GM12878 (cell line): ENCODE measurements at regions of chr2 and their contacts with region 1.

Region 1: DNA sequence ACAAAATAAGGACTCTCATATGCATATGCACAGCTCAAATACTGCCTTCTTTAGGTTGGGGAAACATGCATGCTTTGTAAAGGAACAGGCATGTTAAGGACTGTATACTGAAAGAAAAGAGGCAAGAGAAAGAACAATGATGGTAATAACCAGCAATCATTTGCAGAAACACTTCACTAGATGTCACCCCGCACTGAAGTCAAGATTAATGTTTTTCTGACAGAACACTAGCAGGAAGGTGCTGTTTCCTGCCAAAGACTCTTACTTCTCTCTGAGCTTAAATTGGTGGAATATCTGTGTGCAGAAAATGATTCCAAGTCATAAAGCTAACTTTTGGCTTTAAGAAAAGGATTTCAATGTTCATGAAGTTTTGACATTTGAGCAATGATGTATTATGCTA is 19.3 kb upstream of the CSRNP3 start:
- DNase-seq: no peak
- ATAC-seq: peak; percentile 59
- H3K4me3 ChIP-seq: no peak overlapping the region
- H3K27ac ChIP-seq: no peak overlapping the region
- H3K4me1 ChIP-seq: no peaks in the 10 kb centered on the region
- H3K27me3 ChIP-seq: no peaks in the 10 kb centered on the region
- CTCF ChIP-seq: no peak; a peak in 1 of 6 replicates
- EP300 ChIP-seq: no peak
- POLR2A ChIP-seq: no peak
- RAD21 ChIP-seq: no peak

Region 2: DNA sequence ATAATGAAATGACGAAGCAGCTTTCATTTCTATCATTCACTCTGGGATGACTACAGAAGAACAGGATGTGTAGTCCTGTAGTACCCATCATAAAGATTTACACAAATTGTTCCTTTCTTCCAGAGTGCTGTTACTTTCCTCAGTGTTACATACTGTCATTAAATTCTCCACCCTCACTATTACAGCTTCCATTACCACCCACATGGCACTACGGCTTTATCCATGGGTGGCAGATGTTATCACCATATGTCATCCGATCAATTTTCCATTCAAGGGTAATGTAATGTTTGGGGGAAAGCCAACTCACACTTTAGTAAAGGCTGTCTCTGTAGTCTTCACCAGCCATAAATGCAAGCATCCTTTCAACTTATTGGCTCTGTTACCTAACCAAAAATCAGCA is 12.3 kb after region 1 on chr2:
- CTCF ChIA-PET with region 1: interaction called, 5 read pairs
- POLR2A ChIA-PET with region 1: interaction called, 3 read pairs
- RAD21 ChIA-PET with region 1: interaction called, 4 read pairs
- SMC1A ChIA-PET with region 1: interaction called, 10 read pairs
- in situ Hi-C with region 1: no loop called
- intact Hi-C with region 1: no loop called
- DNase-seq: no peak
- ATAC-seq: no peak; the same call in 2 of the 3 replicates
- H3K4me3 ChIP-seq: no peak overlapping the region
- H3K27ac ChIP-seq: no peak overlapping the region
- H3K4me1 ChIP-seq: no peaks in the 10 kb centered on the region
- H3K27me3 ChIP-seq: no peaks in the 10 kb centered on the region
- CTCF ChIP-seq: no peak
- EP300 ChIP-seq: no peak
- POLR2A ChIP-seq: no peak
- RAD21 ChIP-seq: no peak

Region 3: DNA sequence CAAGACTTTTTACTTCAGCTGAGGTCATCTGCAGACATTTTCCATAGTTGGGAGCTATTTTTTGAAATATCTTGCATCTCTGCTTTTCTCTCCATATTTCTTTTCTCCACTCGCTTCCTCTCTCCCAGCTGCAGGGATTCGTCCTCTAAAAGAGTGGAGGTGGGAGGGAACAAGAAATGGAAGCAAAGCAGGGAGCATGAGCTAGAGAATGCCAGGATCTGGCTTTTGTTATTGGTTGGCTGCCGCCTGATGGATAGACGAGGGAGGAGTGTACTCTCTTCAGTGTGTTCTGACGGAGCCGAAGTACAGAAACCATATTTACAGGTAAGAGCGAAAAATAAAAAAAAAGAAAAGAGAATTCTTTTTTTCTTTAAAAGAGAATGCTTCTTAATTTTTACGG is 19.3 kb after region 1 on chr2 and contains the start of gene CSRNP3:
- CTCF ChIA-PET with region 1: interaction called, 8 read pairs
- POLR2A ChIA-PET with region 1: interaction called, 3 read pairs
- RAD21 ChIA-PET with region 1: interaction called, 6 read pairs
- SMC1A ChIA-PET with region 1: interaction called, 13 read pairs
- in situ Hi-C with region 1: no loop called
- intact Hi-C with region 1: no loop called
- DNase-seq: no peak
- ATAC-seq: peak; percentile 45; the same call in 2 of the 3 replicates
- H3K4me3 ChIP-seq: no peak within 1 kb of the TSS
- H3K27ac ChIP-seq: no peak within 1 kb of the TSS
- H3K4me1 ChIP-seq: no peaks in the 10 kb centered on the region
- H3K27me3 ChIP-seq: no peaks in the 10 kb centered on the region
- CTCF ChIP-seq: no peak
- EP300 ChIP-seq: no peak
- POLR2A ChIP-seq: no peak
- RAD21 ChIP-seq: no peak
- polyA plus RNA-seq, gene CSRNP3: 0.11 TPM in 1 of 2 experiments, not detected in the other

Region 4: GRCh38 chr2:165720511-165720910 is 270.4 kb after region 1 on chr2:
- CTCF ChIA-PET with region 1: no interaction called
- POLR2A ChIA-PET with region 1: no interaction called
- RAD21 ChIA-PET with region 1: no interaction called
- SMC1A ChIA-PET with region 1: no interaction called
- in situ Hi-C with region 1: no loop called
- intact Hi-C with region 1: no loop called
- DNase-seq: no peak
- ATAC-seq: no peak
- H3K4me3 ChIP-seq: no peak overlapping the region
- H3K27ac ChIP-seq: no peak overlapping the region
- H3K4me1 ChIP-seq: no peaks in the 10 kb centered on the region
- H3K27me3 ChIP-seq: no peaks in the 10 kb centered on the region
- CTCF ChIP-seq: no peak
- EP300 ChIP-seq: no peak
- POLR2A ChIP-seq: no peak
- RAD21 ChIP-seq: no peak